AG04450 (cell line): ENCODE measurements at regions of chr1 and their contacts with region 1.

Region 1: DNA sequence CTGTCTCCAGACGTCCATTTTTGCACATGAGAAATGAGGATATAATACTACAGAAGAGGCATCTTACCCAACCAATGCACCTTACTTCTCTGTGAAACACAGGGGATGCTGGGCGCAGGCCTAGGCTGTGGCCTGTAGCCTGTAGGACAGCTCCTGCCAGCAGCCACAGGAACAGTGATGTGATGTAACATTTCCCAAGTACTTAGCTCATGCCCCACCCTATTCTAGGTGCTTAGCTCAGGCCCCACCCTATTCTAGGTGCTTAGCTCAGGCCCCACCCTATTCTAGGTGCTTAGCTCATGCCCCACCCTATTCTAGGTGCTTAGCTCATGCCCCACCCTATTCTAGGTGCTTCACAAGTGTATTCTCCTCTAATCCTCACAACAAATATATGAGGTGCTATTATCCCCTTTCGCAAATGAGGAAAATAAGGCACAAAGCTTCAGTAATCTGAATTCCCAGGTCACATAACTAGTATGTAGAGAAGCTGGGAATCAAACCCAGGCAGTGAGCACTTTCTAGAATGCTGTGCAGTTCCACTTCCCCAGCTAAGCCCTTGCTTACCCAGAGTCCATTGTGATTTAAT is 4.6 kb upstream of the NAXE start:
- DNase-seq: no peak
- H3K4me3 ChIP-seq: no peak overlapping the region
- H3K27ac ChIP-seq: no peak overlapping the region
- H3K27me3 ChIP-seq: peaks cover 11% of the 10 kb centered on the region
- CTCF ChIP-seq: no peak

Region 2: GRCh38 chr1:156456622-156457465 is 130.1 kb before region 1 on chr1:
- CTCF ChIA-PET with region 1: interaction called, 11 read pairs
- POLR2A ChIA-PET with region 1: no interaction called
- DNase-seq: peak; percentile 95
- H3K4me3 ChIP-seq: peak overlapping the region; percentile 60
- H3K27ac ChIP-seq: peak overlapping the region; percentile 92
- H3K27me3 ChIP-seq: peaks cover 4% of the 10 kb centered on the region
- CTCF ChIP-seq: no peak